Calu3 (cell line): ENCODE measurements at regions of chr6 and their contacts with region 1.

Region 1: DNA sequence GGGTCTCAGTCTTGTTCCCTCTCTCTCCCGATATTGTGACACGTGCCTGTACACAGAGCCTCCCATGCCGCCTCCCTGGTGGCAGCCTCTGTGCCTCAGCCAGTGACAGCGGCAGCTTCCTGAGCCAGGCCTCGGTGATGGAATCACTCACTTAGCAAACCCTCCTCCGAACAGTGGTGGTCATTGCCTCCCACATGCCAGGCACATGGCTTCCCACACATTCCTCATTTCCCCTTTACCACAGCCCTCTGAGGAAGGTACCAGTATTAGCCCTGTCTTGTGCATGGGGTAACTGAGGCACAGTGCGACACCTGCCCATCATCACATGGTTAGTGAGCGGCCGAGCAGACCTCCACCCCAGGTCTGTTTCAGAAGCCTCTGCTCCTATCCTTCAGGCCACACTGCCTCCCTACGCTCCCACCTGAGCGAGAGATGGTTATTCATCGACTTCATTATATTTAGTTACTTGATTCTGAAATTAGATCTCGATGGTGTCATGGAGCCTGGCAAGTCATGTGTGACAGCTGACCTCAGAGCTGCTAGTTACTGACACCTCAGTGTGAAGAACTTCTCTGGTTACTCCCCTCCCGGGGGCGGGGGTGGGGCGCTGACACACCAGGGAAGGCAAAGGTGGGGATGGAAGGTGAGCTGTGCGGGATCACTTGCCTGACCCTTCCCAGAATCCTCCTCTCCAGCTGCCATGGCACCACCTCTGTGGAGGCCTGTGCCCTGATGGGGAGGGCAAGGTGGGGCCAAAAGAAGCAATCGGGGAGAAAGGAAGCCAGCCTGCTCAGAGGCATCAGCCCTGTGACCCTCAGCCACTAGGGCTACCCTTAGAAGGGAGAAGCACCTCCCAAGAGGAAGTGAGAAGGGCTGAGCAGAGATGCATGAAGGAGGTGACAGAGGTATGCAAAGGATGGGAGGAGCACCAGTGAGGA is 17.9 kb downstream of the MDGA1 start:
- DNase-seq: no peak
- H3K4me3 Mint-ChIP-seq: no peak overlapping the region
- H3K27ac Mint-ChIP-seq: no peak overlapping the region
- H3K4me1 Mint-ChIP-seq: peaks cover 8% of the 10 kb centered on the region
- H3K27me3 Mint-ChIP-seq: peaks cover 62% of the 10 kb centered on the region
- CTCF ChIP-seq: no peak

Region 2: DNA sequence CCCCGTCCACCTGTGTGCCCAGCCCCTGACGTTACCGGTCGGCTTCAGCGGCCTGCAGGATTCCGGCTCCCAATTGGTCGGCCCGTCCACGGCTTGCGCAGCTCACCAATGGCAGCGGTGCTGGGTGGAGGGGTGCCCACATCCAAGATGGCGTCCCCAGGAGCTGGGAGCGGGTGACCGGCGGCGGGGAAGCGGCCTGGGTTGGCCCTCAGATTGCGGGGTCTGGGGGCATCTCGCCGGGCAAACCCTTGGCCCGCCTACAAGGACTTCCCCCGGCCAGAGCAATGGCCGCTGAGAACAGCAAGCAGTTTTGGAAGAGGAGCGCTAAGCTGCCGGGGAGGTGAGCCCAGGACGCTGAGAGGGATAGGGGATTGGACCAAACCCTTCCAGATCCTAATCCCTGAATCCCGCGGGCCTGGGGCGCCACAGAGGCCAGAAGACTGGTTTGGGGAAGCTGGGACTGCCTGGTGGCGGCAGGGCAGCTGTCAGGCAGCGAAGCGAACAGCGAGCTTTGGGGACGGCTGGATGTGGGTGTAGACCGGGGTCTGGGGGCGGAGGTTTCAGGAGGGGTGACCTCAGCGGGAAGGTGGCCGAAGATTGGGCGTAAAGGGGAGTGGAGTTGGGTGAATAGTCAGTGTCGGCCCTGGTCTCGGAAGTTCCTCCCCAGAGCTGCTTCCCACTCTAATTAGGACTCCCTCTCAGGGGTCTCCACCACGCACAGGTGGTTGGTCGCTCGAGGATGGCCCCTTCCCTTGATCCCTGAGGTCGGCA is 422.0 kb before region 1 on chr6 and contains the starts of genes TBC1D22B and TMEM217:
- CTCF ChIA-PET with region 1: no interaction called
- intact Hi-C with region 1: loop called (anchors 10 kb)
- DNase-seq: peak; percentile 99
- H3K4me3 Mint-ChIP-seq: peak within 1 kb of the TSS; percentile 97
- H3K27ac Mint-ChIP-seq: peak within 1 kb of the TSS; percentile 87
- H3K4me1 Mint-ChIP-seq: peaks cover 14% of the 10 kb centered on the region
- H3K27me3 Mint-ChIP-seq: no peaks in the 10 kb centered on the region
- CTCF ChIP-seq: no peak
- total RNA-seq, gene TBC1D22B: 14.6 and 14.8 TPM in 2 replicates
- total RNA-seq, gene TMEM217: 0.99 and 1.5 TPM in 2 replicates